Panc1 (cell line): ENCODE measurements at regions of chr17 and their contacts with region 1.

Region 1: GRCh38 chr17:996554-997344 is at the start of gene TIMM22:
- DNase-seq: peak; percentile 92
- ATAC-seq: peak; percentile 94
- H3K4me3 ChIP-seq: peak within 1 kb of the TSS; percentile 92 to 98
- H3K27ac ChIP-seq: peak within 1 kb of the TSS; percentile 82
- H3K4me1 ChIP-seq: peaks cover 32% of the 10 kb centered on the region
- H3K27me3 ChIP-seq: no peaks in the 10 kb centered on the region
- CTCF ChIP-seq: peak; percentile 100
- total RNA-seq, gene TIMM22: 10.2 TPM

Region 2: DNA sequence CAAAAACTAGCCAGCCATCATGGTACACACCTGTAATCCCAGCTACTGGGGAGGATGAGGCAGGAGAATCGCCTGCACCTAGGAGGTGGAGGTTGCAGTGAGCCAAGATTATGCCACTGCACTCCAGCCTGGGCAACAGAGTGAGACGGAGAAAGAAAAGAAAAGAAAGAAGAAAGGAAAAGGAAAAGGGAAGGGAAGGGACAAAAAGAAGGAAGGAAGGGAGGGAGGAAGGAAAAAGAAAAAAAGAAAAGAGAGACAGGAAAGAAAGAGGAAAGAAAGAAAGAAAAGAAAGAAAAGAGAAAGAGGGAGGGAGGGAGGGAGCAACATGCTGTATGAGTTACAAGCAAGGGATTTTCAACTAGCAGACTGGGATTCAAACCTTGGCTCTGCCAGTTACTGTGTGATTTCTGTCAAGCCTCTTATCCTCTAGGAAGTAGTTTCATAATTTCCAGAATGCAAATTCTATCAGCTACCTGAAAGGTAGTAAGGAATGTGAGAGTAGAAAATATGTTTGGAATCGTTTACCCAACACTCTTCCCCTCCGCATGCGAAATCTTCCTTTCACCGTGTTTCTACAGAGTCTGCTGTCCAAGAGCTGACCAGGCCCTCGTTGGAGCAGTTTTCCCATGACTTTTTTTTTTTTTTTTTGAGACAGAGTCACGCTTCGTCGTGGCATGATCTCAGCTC is 325.5 kb before region 1 on chr17:
- CTCF ChIA-PET with region 1: no interaction called
- POLR2A ChIA-PET with region 1: interaction called, 11 read pairs
- in situ Hi-C with region 1: no loop called
- intact Hi-C with region 1: no loop called
- DNase-seq: no peak
- ATAC-seq: no peak
- H3K4me3 ChIP-seq: no peak overlapping the region
- H3K27ac ChIP-seq: no peak overlapping the region
- H3K4me1 ChIP-seq: no peaks in the 10 kb centered on the region
- H3K27me3 ChIP-seq: no peaks in the 10 kb centered on the region
- CTCF ChIP-seq: no peak

Region 3: DNA sequence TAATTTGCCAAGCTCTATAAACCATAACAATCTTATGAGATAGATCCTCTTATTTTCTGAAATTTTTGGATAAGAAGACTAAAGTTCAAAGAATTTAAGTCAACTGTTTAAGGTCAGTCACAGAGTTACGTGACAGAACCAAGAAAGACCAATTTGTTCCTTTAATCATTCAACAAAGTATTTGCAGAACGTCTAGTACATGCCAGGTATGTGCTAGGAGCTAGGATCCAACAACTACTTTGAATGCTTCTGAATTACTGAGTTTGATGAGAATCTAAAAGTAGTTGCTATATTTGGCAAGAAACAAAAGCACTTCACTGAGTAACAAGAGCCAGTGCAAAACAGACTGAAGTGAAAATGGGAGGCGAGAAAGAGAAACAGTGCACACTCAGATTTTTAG is 229.7 kb before region 1 on chr17:
- CTCF ChIA-PET with region 1: no interaction called
- POLR2A ChIA-PET with region 1: no interaction called
- in situ Hi-C with region 1: no loop called
- intact Hi-C with region 1: no loop called
- DNase-seq: no peak
- ATAC-seq: no peak
- H3K4me3 ChIP-seq: no peak overlapping the region
- H3K27ac ChIP-seq: no peak overlapping the region
- H3K4me1 ChIP-seq: no peaks in the 10 kb centered on the region
- H3K27me3 ChIP-seq: no peaks in the 10 kb centered on the region
- CTCF ChIP-seq: no peak

Region 4: DNA sequence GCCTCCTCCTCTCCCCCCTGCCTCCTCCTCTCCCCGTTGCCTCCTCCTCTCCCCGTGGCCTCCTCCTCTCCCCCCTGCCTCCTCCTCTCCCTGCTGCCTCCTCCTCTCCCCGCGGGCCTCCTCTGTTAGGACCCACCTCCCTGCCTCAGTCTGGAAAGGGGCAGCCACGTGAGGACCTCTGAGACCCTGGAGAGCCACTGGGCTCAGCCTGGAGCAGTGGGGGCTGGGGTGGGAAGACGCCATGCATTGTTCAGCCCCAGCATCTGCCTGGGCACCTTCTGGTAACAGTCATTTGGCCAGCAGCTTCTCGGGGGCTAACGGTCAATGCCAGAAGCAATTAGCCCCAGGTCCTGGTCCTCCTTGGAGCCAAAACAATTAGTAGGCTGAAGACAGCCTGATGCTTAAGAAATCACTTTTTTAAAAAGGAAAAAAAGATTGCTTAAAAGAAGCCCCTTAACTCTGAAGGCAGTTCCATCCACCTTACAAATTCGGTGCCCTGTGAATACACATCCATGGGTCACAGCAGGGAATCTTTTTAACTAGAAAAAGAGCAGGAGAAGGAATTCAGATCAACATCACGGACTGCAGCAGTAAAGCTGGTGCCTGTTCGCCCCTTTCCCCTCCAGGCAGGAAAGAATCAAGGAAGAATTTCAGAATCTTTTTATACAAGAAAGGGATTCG is 47.0 kb before region 1 on chr17:
- CTCF ChIA-PET with region 1: interaction called, 10 read pairs
- POLR2A ChIA-PET with region 1: no interaction called
- in situ Hi-C with region 1: no loop called
- intact Hi-C with region 1: no loop called
- DNase-seq: no peak
- ATAC-seq: no peak
- H3K4me3 ChIP-seq: no peak overlapping the region
- H3K27ac ChIP-seq: peak overlapping the region; percentile 94
- H3K4me1 ChIP-seq: peaks cover 53% of the 10 kb centered on the region
- H3K27me3 ChIP-seq: no peaks in the 10 kb centered on the region
- CTCF ChIP-seq: no peak